ENCODE measurements at regions of chr7 and their contacts with region 1.

Region 1: DNA sequence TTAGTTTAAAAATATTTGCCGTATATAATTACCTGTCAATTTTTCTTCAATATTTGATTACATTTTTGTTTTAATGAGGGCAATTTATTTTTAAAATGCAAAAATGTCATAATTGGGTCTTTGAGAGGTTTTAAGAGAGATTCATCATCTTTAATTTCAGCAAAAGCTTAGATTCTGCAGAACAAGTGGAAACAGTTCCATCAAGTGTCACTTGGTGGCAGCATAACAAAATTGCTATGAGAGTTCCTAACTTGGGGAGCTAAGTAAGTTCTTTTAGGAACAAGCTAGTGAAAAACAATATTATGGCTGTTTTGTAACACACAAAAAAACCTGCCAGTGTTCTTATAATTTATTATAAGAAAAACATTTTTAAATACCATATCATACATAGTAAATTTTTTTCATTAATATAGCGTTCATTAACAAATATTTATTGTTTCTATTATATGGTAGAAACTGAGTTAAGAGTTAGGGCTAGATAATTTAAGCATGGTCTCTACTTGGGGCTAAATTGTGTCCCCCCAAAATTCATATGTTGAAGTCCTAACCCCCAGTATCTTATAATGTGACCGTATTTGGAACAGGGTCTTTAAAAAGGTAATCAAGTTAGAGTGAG is 155.2 kb downstream of the MAGI2 start:
- DNase-seq: no peak
- H3K4me3 ChIP-seq: no peak overlapping the region
- H3K27ac ChIP-seq: no peak overlapping the region
- H3K4me1 ChIP-seq: no peaks in the 10 kb centered on the region
- H3K27me3 ChIP-seq: no peaks in the 10 kb centered on the region
- CTCF ChIP-seq: peak in 3 of 4 experiments; percentile 50 to 78 (median 64)
- EP300 ChIP-seq: no peak
- POLR2A ChIP-seq: no peak

Region 2: DNA sequence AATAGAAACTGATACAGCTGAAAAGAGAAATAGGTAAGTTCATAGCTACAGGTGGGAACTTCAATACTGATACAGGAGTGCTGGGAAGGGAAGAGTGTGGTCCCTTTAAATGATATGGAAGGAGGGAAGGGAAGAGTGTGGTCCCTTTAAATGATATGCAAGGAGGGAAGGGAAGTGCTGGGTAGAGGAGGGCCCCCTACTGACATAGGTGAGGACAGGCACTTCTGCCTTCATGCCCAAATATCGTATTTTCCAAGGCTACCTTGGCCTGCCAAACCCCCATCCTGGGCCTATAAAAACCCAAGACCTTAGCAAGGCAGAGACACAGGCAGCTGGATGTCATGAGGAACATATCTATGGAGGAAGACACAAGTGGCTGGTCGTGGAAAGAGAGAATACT is 63.0 kb after region 1 on chr7:
- intact Hi-C with region 1: loop called (anchors 10 kb)
- DNase-seq: no peak
- H3K4me3 ChIP-seq: no peak overlapping the region
- H3K27ac ChIP-seq: no peak overlapping the region
- H3K4me1 ChIP-seq: no peaks in the 10 kb centered on the region
- H3K27me3 ChIP-seq: no peaks in the 10 kb centered on the region
- CTCF ChIP-seq: no peak
- EP300 ChIP-seq: no peak
- POLR2A ChIP-seq: no peak

Region 3: GRCh38 chr7:79452032-79452494 is 153.8 kb after region 1 on chr7:
- intact Hi-C with region 1: loop called (anchors 5 kb)
- DNase-seq: peak; percentile 95
- H3K4me3 ChIP-seq: peak overlapping the region; percentile 74 to 84 (median 79)
- H3K27ac ChIP-seq: peak overlapping the region; percentile 90 to 97 (median 94)
- H3K4me1 ChIP-seq: peaks cover 0 to 37% (median 27%) of the 10 kb centered on the region in 4 donors
- H3K27me3 ChIP-seq: no peaks in the 10 kb centered on the region
- CTCF ChIP-seq: no peak
- EP300 ChIP-seq: peak in 2 of 4 donors; percentile 58 to 59
- POLR2A ChIP-seq: peak; percentile 76 to 80

Region 4: DNA sequence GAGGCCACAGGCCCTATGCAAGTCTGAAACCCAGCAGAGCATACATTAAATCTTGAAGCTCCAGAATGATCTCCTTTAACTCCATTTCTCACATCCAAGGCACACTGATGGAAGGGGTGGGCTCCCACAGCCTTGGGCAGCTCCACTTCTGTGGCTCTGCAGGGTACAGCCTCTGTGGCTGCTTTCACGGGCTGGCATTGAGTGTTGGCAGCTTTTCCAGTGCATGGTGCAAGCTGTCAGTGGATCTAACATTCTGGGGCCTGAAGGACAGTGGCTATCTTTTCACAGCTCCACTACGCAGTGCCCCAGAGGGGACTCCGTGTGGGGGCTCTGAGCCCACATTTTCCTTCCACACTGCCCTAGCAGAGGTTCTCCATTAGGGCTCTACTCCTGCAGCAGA is 421.0 kb after region 1 on chr7:
- intact Hi-C with region 1: no loop called
- DNase-seq: no peak
- H3K4me3 ChIP-seq: no peak overlapping the region
- H3K27ac ChIP-seq: no peak overlapping the region
- H3K4me1 ChIP-seq: no peaks in the 10 kb centered on the region
- H3K27me3 ChIP-seq: no peaks in the 10 kb centered on the region
- CTCF ChIP-seq: no peak
- EP300 ChIP-seq: no peak
- POLR2A ChIP-seq: no peak